ENCODE measurements at regions of chr1 and their contacts with region 1.

Region 1: DNA sequence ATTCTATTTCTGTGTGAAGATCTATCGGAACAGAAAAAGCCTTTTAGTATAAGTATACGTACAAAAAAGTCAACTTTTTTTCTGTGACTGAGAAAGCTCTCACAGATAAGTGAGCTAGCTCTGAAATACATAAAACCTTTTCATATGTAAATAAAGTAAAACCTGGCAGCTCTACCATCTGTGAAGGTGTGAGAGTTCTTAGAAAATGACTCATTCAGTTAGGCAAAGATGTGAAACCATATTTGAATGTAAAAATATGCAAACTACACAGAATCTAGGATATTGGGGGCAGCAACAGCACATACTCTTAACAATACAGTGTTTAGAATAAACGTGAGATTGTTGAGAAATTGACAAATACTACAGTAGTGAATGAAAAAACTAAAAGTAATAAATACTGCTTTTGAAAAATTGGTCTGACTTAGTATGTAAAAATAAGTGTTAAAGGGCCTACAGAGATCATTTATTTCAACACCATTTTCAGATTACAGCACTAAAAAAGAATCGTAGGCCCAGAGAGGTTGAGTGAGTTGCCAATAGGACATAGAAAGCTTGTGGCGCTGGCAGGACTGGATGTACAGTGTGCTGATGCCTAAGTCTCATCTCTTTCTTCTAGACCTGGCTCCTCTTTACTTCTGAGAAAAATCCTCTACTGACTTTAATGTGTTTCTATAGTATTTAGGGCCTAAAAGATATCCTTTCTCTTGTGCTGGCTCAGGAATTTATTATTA is 19.8 kb downstream of the ATP6V1G3 start:
- DNase-seq: no peak
- H3K4me3 Mint-ChIP-seq: peak overlapping the region; percentile 67
- H3K27ac Mint-ChIP-seq: peak overlapping the region; percentile 79
- H3K4me1 Mint-ChIP-seq: peaks cover 78% of the 10 kb centered on the region
- H3K27me3 Mint-ChIP-seq: no peaks in the 10 kb centered on the region

Region 2: GRCh38 chr1:198030682-198031081 is 490.0 kb before region 1 on chr1:
- CTCF ChIA-PET with region 1: no interaction called
- POLR2A ChIA-PET with region 1: no interaction called
- intact Hi-C with region 1: no loop called
- DNase-seq: no peak
- H3K4me3 Mint-ChIP-seq: no peak overlapping the region
- H3K27ac Mint-ChIP-seq: no peak overlapping the region
- H3K4me1 Mint-ChIP-seq: no peaks in the 10 kb centered on the region
- H3K27me3 Mint-ChIP-seq: no peaks in the 10 kb centered on the region

Region 3: GRCh38 chr1:198541737-198542136 is 21.0 kb after region 1 on chr1:
- CTCF ChIA-PET with region 1: no interaction called
- POLR2A ChIA-PET with region 1: no interaction called
- intact Hi-C with region 1: no loop called
- DNase-seq: no peak
- H3K4me3 Mint-ChIP-seq: no peak overlapping the region
- H3K27ac Mint-ChIP-seq: no peak overlapping the region
- H3K4me1 Mint-ChIP-seq: peaks cover 62% of the 10 kb centered on the region
- H3K27me3 Mint-ChIP-seq: no peaks in the 10 kb centered on the region

Region 4: GRCh38 chr1:198556971-198557370 is 36.3 kb after region 1 on chr1:
- CTCF ChIA-PET with region 1: interaction called, 3 read pairs
- POLR2A ChIA-PET with region 1: no interaction called
- intact Hi-C with region 1: loop called (anchors 1 kb)
- DNase-seq: peak; percentile 74
- H3K4me3 Mint-ChIP-seq: peak overlapping the region; percentile 69
- H3K27ac Mint-ChIP-seq: peak overlapping the region; percentile 49
- H3K4me1 Mint-ChIP-seq: peaks cover 78% of the 10 kb centered on the region
- H3K27me3 Mint-ChIP-seq: no peaks in the 10 kb centered on the region

Region 5: DNA sequence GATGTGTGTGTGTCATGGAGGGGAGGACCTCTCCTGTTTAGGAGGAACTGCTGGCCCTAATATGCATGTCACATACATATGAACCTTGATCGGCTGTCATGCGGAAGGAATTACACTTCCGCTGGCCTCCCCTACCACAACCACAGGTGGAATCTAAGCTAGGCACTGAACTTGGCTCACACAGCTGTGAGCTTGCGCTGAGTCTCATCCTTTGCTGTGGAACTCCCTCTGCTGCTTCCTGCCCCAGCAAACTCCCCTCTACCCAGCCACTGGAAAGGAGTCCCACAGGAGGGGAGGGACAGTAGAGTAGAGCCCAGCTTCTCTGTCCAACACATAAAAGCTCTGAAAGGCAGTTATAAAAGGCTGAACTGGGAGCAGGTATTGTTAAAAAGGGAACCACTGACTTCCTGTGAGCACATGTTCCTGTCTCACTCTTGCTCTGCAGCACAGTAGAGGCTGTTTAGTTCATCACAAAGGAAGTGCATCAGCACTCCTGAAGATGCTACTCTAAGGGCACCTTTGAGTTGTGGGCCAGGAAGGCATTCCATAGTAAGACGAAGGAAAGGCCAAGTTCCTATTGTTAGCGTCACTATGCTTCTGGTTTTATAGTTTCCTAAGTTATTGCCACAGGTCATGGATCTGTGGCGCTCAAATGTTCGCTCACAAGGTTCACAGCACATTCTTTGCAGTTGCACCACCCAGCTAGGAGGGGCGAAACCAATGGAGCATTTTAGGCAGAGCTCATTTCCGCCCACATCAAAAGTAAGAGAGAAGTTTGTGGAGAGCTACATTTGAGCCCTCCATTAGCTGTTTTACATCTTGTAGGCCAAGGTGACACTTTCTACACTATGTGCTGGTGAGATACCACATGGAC is 100.5 kb after region 1 on chr1:
- CTCF ChIA-PET with region 1: interaction called, 4 read pairs
- POLR2A ChIA-PET with region 1: interaction called, 5 read pairs
- intact Hi-C with region 1: loop called (anchors 1 kb)
- DNase-seq: peak; percentile 84
- H3K4me3 Mint-ChIP-seq: peak overlapping the region; percentile 74
- H3K27ac Mint-ChIP-seq: peak overlapping the region; percentile 94
- H3K4me1 Mint-ChIP-seq: peaks cover 87% of the 10 kb centered on the region
- H3K27me3 Mint-ChIP-seq: no peaks in the 10 kb centered on the region

Region 6: GRCh38 chr1:198734323-198735008 is 213.8 kb after region 1 on chr1:
- CTCF ChIA-PET with region 1: no interaction called
- POLR2A ChIA-PET with region 1: no interaction called
- intact Hi-C with region 1: loop called (anchors 1 kb)
- DNase-seq: no peak
- H3K4me3 Mint-ChIP-seq: no peak overlapping the region
- H3K27ac Mint-ChIP-seq: peak overlapping the region; percentile 68
- H3K4me1 Mint-ChIP-seq: peaks cover 70% of the 10 kb centered on the region
- H3K27me3 Mint-ChIP-seq: no peaks in the 10 kb centered on the region

Region 7: GRCh38 chr1:199173356-199173755 is 652.7 kb after region 1 on chr1:
- CTCF ChIA-PET with region 1: no interaction called
- POLR2A ChIA-PET with region 1: no interaction called
- intact Hi-C with region 1: loop called (anchors 5 kb)
- DNase-seq: no peak
- H3K4me3 Mint-ChIP-seq: no peak overlapping the region
- H3K27ac Mint-ChIP-seq: no peak overlapping the region
- H3K4me1 Mint-ChIP-seq: peaks cover 49% of the 10 kb centered on the region
- H3K27me3 Mint-ChIP-seq: no peaks in the 10 kb centered on the region